Panc1 (cell line): ENCODE measurements at regions of chr17 and their contacts with region 1.

Region 1: DNA sequence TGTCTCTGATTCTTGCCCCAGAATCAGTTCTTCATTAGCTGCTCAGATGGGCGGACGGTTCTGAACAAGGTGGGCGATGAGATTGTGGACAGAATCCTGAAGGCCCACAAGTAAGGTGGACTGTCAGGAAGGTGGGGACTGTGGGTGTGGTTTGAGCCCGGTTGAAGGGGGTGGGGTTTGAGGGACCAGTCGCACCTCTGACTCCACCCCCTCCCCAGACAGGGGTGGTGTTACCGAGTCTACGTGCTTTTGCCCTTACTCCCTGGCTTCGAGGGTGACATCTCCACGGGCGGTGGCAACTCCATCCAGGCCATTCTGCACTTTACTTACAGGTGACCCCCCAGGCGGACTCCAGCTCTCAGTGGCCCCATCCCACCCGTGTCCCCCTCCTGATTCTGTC is 11.3 kb downstream of the PLD2 start:
- DNase-seq: no peak
- ATAC-seq: peak; percentile 64; the same call in 1 of the 2 replicates
- H3K4me3 ChIP-seq: no peak overlapping the region
- H3K27ac ChIP-seq: no peak overlapping the region
- H3K4me1 ChIP-seq: no peaks in the 10 kb centered on the region
- H3K27me3 ChIP-seq: no peaks in the 10 kb centered on the region
- CTCF ChIP-seq: no peak

Region 2: DNA sequence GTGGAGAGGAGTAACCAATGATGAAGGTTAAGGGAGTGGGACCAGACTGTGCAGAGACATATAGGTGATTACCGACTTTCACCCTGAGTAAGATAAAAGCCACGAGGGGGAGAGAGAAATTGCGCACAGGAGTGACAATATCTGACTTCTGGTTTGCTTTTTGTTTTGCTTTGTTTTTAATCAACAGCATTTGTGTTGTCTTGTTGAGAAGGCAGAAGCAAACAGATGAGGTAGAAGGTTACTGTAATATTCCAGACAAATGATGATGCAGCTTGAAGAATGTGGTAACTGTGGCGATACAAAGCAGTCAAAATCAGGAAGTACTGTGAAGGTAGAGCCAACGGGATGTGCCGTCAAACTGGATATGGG is 121.9 kb before region 1 on chr17:
- CTCF ChIA-PET with region 1: no interaction called
- POLR2A ChIA-PET with region 1: interaction called, 10 read pairs
- in situ Hi-C with region 1: no loop called
- intact Hi-C with region 1: no loop called
- DNase-seq: no peak
- ATAC-seq: no peak
- H3K4me3 ChIP-seq: no peak overlapping the region
- H3K27ac ChIP-seq: no peak overlapping the region
- H3K4me1 ChIP-seq: peaks cover 1% of the 10 kb centered on the region; the same call in 1 of the 2 replicates
- H3K27me3 ChIP-seq: no peaks in the 10 kb centered on the region
- CTCF ChIP-seq: no peak

Region 3: GRCh38 chr17:5011928-5012327 is 193.7 kb after region 1 on chr17:
- CTCF ChIA-PET with region 1: no interaction called
- POLR2A ChIA-PET with region 1: no interaction called
- in situ Hi-C with region 1: no loop called
- intact Hi-C with region 1: no loop called
- DNase-seq: no peak
- ATAC-seq: no peak
- H3K4me3 ChIP-seq: no peak overlapping the region
- H3K27ac ChIP-seq: no peak overlapping the region
- H3K4me1 ChIP-seq: no peaks in the 10 kb centered on the region
- H3K27me3 ChIP-seq: no peaks in the 10 kb centered on the region
- CTCF ChIP-seq: no peak

Region 4: GRCh38 chr17:5097101-5097834 is 279.0 kb after region 1 on chr17:
- CTCF ChIA-PET with region 1: no interaction called
- POLR2A ChIA-PET with region 1: no interaction called
- in situ Hi-C with region 1: no loop called
- intact Hi-C with region 1: no loop called
- DNase-seq: no peak
- ATAC-seq: no peak
- H3K4me3 ChIP-seq: no peak overlapping the region
- H3K27ac ChIP-seq: no peak overlapping the region
- H3K4me1 ChIP-seq: no peaks in the 10 kb centered on the region
- H3K27me3 ChIP-seq: no peaks in the 10 kb centered on the region
- CTCF ChIP-seq: no peak